ENCODE measurements at regions of chr6 and their contacts with region 1.

Region 1: GRCh38 chr6:33592411-33593054 is 12.5 kb upstream of the BAK1 start:
- DNase-seq: peak; percentile 64
- ATAC-seq: peak; percentile 51
- H3K4me3 Mint-ChIP-seq: peak overlapping the region; percentile 58
- H3K27ac Mint-ChIP-seq: peak overlapping the region; percentile 93
- H3K4me1 Mint-ChIP-seq: peaks cover 68% of the 10 kb centered on the region
- H3K27me3 Mint-ChIP-seq: no peaks in the 10 kb centered on the region
- CTCF ChIP-seq: no peak

Region 2: GRCh38 chr6:33579828-33580714 is 12.5 kb before region 1 on chr6 and contains the start of gene BAK1:
- CTCF ChIA-PET with region 1: interaction called, 10 read pairs
- POLR2A ChIA-PET with region 1: interaction called, 18 read pairs
- intact Hi-C with region 1: loop called (anchors 1 kb)
- DNase-seq: peak; percentile 72
- ATAC-seq: peak; percentile 97
- H3K4me3 Mint-ChIP-seq: peak within 1 kb of the TSS; percentile 88
- H3K27ac Mint-ChIP-seq: peak within 1 kb of the TSS; percentile 89
- H3K4me1 Mint-ChIP-seq: peaks cover 45% of the 10 kb centered on the region
- H3K27me3 Mint-ChIP-seq: no peaks in the 10 kb centered on the region
- CTCF ChIP-seq: no peak
- total RNA-seq, gene BAK1: 29.5 and 29.6 TPM in 2 replicates

Region 3: DNA sequence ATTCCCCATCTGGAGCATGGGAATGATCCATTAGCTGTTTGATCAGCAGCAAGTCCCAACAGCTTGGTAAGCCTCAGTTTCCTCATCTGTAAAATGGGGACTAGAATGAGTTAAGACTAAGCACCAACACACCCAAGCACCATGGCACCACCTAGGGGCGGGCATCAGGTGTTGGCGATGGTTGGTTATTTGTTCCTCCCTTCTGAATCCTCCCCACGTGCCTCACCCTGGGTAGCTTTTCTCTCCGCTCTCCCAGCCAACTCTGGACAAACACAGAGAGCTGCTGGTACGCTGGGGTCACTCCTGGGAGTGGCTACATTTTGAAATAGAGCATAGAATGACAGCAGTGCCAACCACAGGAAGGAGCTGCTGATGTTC is 15.2 kb after region 1 on chr6:
- CTCF ChIA-PET with region 1: interaction called, 66 read pairs
- POLR2A ChIA-PET with region 1: interaction called, 19 read pairs
- intact Hi-C with region 1: loop called (anchors 1 kb)
- DNase-seq: no peak
- ATAC-seq: peak; percentile 87
- H3K4me3 Mint-ChIP-seq: no peak overlapping the region
- H3K27ac Mint-ChIP-seq: no peak overlapping the region
- H3K4me1 Mint-ChIP-seq: peaks cover 26% of the 10 kb centered on the region
- H3K27me3 Mint-ChIP-seq: no peaks in the 10 kb centered on the region
- CTCF ChIP-seq: no peak

Region 4: GRCh38 chr6:33694401-33694931 is 101.9 kb after region 1 on chr6:
- CTCF ChIA-PET with region 1: interaction called, 6 read pairs
- POLR2A ChIA-PET with region 1: interaction called, 11 read pairs
- intact Hi-C with region 1: loop called (anchors 1 kb)
- DNase-seq: no peak
- ATAC-seq: peak; percentile 14
- H3K4me3 Mint-ChIP-seq: peak overlapping the region; percentile 24
- H3K27ac Mint-ChIP-seq: peak overlapping the region; percentile 83
- H3K4me1 Mint-ChIP-seq: peaks cover 78% of the 10 kb centered on the region
- H3K27me3 Mint-ChIP-seq: no peaks in the 10 kb centered on the region
- CTCF ChIP-seq: no peak